Dendritic cell treated with granulocyte-macrophage colony-stimulating factor and Interleukin-4, amounts not matched to agents 40 ng/mL and 50 ng/mL, for 4 days (primary cell): ENCODE measurements at regions of chr15 and their contacts with region 1.

Region 1: DNA sequence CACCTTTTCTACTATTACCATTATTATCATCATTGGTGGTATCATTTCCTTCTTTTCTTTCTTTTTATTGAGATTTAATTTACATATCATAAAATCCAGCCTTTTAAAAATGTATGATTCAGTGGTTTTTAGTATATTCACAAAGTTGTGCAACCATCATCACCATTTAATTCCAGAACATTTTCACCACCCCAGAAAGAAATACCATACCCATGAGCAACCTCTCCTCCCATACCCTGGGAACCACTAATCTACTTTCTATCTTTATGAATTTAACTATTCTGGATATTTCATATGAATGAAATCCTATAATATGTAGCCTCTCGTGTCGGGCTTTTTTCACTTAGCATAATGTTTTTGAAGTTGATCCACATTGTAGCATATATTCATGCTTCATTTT is 29.1 kb downstream of the AAGAB start:
- H3K4me3 Mint-ChIP-seq: no peak overlapping the region
- H3K27ac Mint-ChIP-seq: no peak overlapping the region
- H3K4me1 Mint-ChIP-seq: peaks cover 5% of the 10 kb centered on the region
- H3K27me3 Mint-ChIP-seq: no peaks in the 10 kb centered on the region

Region 2: DNA sequence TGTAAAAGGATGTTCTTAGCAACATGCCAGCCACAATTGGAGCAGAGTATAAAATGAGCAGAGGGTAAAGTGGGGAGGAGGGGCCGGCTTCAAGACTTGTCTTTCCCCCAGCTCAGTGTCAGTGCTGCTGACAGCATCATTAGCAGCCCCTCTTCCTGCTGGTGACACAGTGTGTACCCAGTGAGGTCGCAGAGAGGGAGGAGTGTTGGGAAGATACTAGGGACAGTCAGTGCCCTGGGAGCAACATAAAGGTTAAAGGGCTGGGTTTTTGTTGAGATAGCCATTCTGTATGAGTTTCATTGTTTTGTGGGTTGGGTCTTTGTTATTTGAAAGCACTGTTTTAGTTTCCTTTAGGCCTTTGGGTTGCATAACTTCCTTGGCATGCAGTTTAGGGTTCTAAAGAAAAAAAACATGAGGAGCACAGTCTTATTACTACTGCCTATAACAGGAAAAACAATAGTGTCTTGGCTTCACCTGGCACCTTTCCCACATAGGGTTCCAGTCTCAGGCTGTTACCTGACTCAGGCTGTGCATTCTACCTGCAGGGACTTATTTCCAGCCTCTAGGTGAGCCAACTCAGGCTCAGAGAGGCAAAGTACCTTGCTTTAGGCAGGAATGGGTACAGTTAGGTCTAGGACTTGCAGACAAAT is 505.9 kb after region 1 on chr15:
- intact Hi-C with region 1: loop called (anchors 10 kb)
- H3K4me3 Mint-ChIP-seq: no peak overlapping the region
- H3K27ac Mint-ChIP-seq: no peak overlapping the region
- H3K4me1 Mint-ChIP-seq: peaks cover 22% of the 10 kb centered on the region
- H3K27me3 Mint-ChIP-seq: no peaks in the 10 kb centered on the region